ENCODE measurements at regions of chr3 and their contacts with region 1.

Region 1: GRCh38 chr3:197256836-197257444 is 41.5 kb downstream of the DLG1 start:
- DNase-seq: peak; percentile 55
- H3K4me3 ChIP-seq: no peak overlapping the region
- H3K27ac ChIP-seq: no peak overlapping the region
- H3K4me1 ChIP-seq: no peaks in the 10 kb centered on the region
- CTCF ChIP-seq: peak; percentile 99

Region 2: GRCh38 chr3:197511130-197511529 is 254.2 kb after region 1 on chr3:
- CTCF ChIA-PET with region 1: no interaction called
- POLR2A ChIA-PET with region 1: no interaction called
- intact Hi-C with region 1: loop called (anchors 2 kb)
- DNase-seq: no peak
- H3K4me3 ChIP-seq: no peak overlapping the region
- H3K27ac ChIP-seq: no peak overlapping the region
- H3K4me1 ChIP-seq: peaks cover 4% of the 10 kb centered on the region
- CTCF ChIP-seq: no peak